Activated T-helper 1 cell treated with anti-CD3 and anti-CD28 coated beads, Interleukin-12 subunit alpha, Interleukin-12 subunit beta, Interleukin-2, Interleukin-4 antibody, amounts not matched to agents 30 ng/mL and 10 ng/mL and 1 ng/mL, durations not matched to agents 14 hours and 24 hours and 36 hours (primary cell): ENCODE measurements at regions of chr9 and their contacts with region 1.

Region 1: GRCh38 chr9:34701769-34702736 is 7.9 kb downstream of the CCL21 start:
- DNase-seq: peak; percentile 66
- H3K4me3 Mint-ChIP-seq: peak overlapping the region; percentile 82
- H3K27ac Mint-ChIP-seq: peak overlapping the region; percentile 68
- H3K4me1 Mint-ChIP-seq: peaks cover 6% of the 10 kb centered on the region
- H3K27me3 Mint-ChIP-seq: peaks cover 29% of the 10 kb centered on the region

Region 2: GRCh38 chr9:34376596-34377403 is 325.3 kb before region 1 on chr9 and contains the start of gene MYORG:
- intact Hi-C with region 1: loop called (anchors 1 kb)
- DNase-seq: peak; percentile 97
- H3K4me3 Mint-ChIP-seq: peak within 1 kb of the TSS; percentile 88
- H3K27ac Mint-ChIP-seq: peak within 1 kb of the TSS; percentile 32
- H3K4me1 Mint-ChIP-seq: peaks cover 45% of the 10 kb centered on the region
- H3K27me3 Mint-ChIP-seq: peaks cover 13% of the 10 kb centered on the region
- total RNA-seq, gene MYORG: 1.0 and 1.9 TPM in 2 replicates

Region 3: DNA sequence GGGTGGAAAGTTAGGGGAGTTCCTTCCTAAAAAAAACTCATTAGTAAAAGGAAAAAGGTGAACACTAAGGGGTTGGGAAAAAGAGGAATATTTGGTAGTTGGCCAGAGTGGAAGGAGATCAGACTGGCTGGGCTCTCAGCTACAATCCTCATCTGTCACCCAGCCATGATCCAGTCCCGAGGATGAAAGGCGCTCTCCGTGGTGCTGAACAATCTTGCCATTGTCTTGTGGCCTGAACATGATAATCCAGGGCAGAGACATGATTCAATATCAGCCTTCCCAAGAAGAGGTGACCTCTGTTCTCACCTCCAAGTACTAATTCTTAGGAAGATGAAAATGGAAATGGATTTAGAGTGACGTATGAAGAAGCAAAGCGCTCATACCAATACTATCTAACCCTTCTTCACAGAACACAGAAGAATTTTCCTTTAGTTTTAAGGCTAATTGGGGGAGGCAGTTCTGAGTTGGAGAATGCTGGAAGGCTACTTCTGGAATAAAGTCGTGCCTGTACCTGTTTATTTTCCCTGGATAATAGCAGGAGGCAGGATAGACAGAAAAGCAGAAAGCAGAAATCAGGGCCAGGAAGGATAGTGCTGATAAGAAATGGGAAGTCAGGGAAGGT is 288.7 kb before region 1 on chr9:
- intact Hi-C with region 1: no loop called
- DNase-seq: peak; percentile 21
- H3K4me3 Mint-ChIP-seq: no peak overlapping the region
- H3K27ac Mint-ChIP-seq: no peak overlapping the region
- H3K4me1 Mint-ChIP-seq: no peaks in the 10 kb centered on the region
- H3K27me3 Mint-ChIP-seq: no peaks in the 10 kb centered on the region

Region 4: DNA sequence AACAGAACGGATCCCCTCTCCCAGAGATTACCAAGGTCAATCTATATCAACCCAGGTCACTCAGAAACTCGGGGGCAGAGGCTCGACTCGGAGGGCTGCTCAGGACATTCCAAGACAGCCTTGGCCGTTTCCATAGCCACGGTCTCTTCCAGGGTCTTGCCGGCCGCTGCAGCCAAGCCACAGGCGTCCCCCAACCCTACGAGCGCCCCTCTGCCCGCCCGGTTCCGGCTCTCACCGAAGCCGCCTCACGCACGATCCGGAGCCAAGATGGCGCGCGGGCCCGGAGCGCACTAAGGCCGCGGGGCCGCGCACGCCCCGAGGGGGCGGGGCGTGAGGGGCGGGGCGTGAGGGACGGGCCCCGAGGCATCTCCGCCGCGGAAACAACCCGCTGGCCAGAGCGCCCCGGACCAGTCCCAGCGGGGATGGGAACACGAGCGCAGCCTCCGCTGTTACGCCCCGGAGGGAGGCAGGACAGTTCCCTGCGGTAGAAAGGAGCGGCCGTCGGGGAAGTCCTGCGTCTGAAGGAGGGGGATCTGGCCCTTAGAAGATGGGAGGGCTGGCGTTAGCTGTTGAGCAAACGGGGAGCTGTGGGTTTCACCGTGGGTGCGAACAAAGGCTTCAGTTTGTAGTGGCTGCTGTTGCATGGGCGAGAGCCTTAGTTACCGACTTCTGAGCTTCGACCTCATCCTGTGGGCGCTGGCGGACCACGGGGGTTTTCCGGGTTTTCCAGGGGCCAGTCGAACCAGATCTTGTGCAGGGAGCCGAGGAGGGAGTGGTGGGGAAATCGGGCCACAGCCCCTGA is 90.0 kb before region 1 on chr9 and contains the start of gene RPP25L:
- intact Hi-C with region 1: loop called (anchors 1 kb)
- DNase-seq: peak; percentile 84
- H3K4me3 Mint-ChIP-seq: peak within 1 kb of the TSS; percentile 95
- H3K27ac Mint-ChIP-seq: peak within 1 kb of the TSS; percentile 96
- H3K4me1 Mint-ChIP-seq: peaks cover 24% of the 10 kb centered on the region
- H3K27me3 Mint-ChIP-seq: no peaks in the 10 kb centered on the region
- total RNA-seq, gene RPP25L: 37.5 and 40.2 TPM in 2 replicates

Region 5: DNA sequence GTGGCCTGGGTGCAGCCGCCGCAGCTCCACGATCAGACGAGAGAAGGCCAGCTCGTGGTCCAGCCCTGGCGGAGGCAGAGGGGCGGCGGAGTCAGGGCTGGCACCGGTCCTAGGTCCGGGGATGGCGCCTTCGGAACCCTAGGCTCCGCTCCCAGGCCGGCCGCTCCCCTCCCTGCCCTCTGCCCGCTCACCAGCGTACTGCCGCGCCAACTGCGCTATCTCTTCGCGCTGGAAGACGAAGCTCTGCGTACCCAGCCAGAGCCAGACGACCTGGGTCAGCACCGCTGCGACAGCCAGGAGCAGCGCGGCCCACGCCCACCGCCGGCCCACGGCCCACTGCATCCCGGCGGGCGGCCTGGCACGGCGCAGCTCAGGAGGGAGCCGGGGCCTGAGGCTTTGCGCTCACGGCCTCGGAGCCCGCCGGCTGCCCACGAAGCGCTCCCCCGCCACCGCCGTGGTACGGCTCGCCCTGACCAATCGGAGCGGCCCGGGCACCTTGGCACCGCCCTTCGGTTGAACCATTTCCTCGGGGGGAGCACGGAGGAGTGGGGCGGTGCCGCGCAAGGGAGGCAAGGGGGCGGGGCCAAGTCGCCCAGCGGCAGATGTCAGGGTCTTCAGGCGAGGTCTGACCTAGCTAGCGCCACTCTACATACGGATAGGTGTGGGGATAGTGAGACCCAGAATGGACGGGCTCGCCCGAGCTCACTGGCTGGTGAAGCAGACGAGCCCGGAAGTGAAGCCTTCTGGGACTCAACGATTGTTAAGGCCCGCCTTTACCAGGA is 64.5 kb before region 1 on chr9 and contains the start of gene SIGMAR1:
- intact Hi-C with region 1: loop called (anchors 2 kb)
- DNase-seq: peak; percentile 94
- H3K4me3 Mint-ChIP-seq: peak within 1 kb of the TSS; percentile 97
- H3K27ac Mint-ChIP-seq: peak within 1 kb of the TSS; percentile 88
- H3K4me1 Mint-ChIP-seq: peaks cover 39% of the 10 kb centered on the region
- H3K27me3 Mint-ChIP-seq: no peaks in the 10 kb centered on the region
- total RNA-seq, gene SIGMAR1: 128 and 130 TPM in 2 replicates

Region 6: DNA sequence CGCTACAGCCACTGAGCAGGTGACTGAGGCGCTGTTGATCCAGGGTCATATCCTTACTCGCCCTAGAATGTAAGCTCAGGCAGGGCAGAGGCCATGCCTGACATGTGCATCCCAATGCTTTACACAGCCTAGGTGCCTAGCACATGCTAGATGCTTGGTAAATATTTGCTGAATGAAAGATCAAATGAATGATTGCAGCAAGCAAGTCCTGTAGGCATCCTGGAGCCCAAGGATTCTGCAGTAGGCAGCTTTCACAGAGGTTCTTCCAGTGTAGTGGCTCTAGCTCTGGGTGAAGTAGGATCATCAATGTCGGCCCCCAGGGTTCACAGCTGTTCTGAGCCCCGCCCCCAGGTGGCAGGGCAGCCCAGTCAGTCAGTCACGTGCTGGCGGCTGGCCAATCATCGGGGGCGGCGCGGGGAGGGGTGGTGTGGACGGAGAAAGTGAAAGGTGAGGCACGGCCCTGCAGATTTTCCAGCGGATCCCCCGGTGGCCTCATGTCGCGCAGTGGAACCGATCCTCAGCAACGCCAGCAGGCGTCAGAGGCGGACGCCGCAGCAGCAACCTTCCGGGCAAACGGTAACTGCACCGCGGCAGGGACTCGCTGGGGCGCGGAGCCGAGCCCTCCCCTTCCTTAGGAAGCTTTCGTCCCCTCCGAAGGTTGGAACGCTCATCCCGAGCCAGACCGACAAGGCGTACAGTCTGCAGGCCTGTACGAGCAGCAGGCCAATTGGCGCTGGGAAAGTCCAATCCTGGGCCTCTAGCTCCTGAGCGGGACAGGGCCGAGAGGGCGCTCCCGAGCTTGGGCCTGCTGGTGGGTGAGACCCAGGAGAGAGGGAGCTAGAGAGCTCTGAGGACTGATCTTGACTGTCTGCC is 55.6 kb before region 1 on chr9 and contains the start of gene GALT:
- intact Hi-C with region 1: loop called (anchors 1 kb)
- DNase-seq: peak; percentile 95
- H3K4me3 Mint-ChIP-seq: peak within 1 kb of the TSS; percentile 96
- H3K27ac Mint-ChIP-seq: peak within 1 kb of the TSS; percentile 88
- H3K4me1 Mint-ChIP-seq: peaks cover 33% of the 10 kb centered on the region
- H3K27me3 Mint-ChIP-seq: no peaks in the 10 kb centered on the region
- total RNA-seq, gene GALT: 72.0 and 73.7 TPM in 2 replicates

Region 7: GRCh38 chr9:34675048-34675714 is 26.9 kb before region 1 on chr9:
- intact Hi-C with region 1: loop called (anchors 1 kb)
- DNase-seq: peak; percentile 31
- H3K4me3 Mint-ChIP-seq: no peak overlapping the region
- H3K27ac Mint-ChIP-seq: no peak overlapping the region
- H3K4me1 Mint-ChIP-seq: no peaks in the 10 kb centered on the region
- H3K27me3 Mint-ChIP-seq: peaks cover 4% of the 10 kb centered on the region